ENCODE measurements at regions of chr18 and their contacts with region 1.

Region 1: DNA sequence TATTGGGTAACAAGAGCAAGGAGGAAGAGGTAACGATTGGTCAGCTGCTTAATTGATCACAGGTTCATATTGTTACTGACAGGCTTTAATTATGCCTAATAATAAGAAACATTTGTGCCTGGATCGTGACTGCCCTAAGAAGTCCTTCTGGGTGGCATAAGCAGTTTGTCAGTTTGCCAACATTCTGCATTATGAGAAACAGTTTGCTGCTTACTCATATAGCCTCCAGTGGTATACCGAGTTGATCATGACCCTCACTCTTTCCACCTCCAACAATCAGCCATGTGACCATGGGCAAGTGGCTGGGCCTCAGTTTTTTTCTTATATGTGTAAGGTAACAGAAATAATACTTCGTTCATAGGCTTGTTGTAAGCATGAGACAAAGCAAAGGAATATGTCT is 96.6 kb upstream of the CABLES1 start:
- DNase-seq: peak; percentile 42
- H3K4me3 ChIP-seq: no peak overlapping the region
- H3K27ac ChIP-seq: no peak overlapping the region
- H3K4me1 ChIP-seq: no peaks in the 10 kb centered on the region
- H3K27me3 ChIP-seq: no peaks in the 10 kb centered on the region
- CTCF ChIP-seq: no peak

Region 2: DNA sequence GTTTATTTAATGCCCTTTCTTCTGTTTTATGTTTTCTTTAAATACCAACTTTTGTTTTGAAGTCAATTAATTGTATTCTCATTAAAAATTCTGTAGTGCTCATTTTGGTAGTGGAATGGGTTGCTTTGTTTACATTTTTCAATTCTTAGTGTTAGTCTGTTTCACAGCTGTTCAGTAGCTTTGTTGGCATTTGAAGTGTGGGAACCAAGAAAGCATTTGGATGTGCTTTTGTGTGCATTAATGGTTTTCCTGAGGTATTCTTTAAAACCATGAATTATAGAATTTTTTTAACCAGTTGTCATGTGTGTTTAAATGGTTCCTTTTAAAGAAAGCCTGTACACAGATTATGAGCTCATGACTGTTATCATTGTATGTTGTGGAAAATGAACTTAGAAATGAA is 1278.4 kb before region 1 on chr18:
- CTCF ChIA-PET with region 1: no interaction called
- POLR2A ChIA-PET with region 1: no interaction called
- intact Hi-C with region 1: no loop called
- DNase-seq: no peak
- H3K4me3 ChIP-seq: no peak overlapping the region
- H3K27ac ChIP-seq: no peak overlapping the region
- H3K4me1 ChIP-seq: peaks cover 40% of the 10 kb centered on the region
- H3K27me3 ChIP-seq: no peaks in the 10 kb centered on the region
- CTCF ChIP-seq: no peak

Region 3: GRCh38 chr18:22913857-22914256 is 124.9 kb before region 1 on chr18:
- CTCF ChIA-PET with region 1: no interaction called
- POLR2A ChIA-PET with region 1: interaction called, 16 read pairs
- intact Hi-C with region 1: no loop called
- DNase-seq: no peak
- H3K4me3 ChIP-seq: no peak overlapping the region
- H3K27ac ChIP-seq: no peak overlapping the region
- H3K4me1 ChIP-seq: no peaks in the 10 kb centered on the region
- H3K27me3 ChIP-seq: no peaks in the 10 kb centered on the region
- CTCF ChIP-seq: no peak

Region 4: DNA sequence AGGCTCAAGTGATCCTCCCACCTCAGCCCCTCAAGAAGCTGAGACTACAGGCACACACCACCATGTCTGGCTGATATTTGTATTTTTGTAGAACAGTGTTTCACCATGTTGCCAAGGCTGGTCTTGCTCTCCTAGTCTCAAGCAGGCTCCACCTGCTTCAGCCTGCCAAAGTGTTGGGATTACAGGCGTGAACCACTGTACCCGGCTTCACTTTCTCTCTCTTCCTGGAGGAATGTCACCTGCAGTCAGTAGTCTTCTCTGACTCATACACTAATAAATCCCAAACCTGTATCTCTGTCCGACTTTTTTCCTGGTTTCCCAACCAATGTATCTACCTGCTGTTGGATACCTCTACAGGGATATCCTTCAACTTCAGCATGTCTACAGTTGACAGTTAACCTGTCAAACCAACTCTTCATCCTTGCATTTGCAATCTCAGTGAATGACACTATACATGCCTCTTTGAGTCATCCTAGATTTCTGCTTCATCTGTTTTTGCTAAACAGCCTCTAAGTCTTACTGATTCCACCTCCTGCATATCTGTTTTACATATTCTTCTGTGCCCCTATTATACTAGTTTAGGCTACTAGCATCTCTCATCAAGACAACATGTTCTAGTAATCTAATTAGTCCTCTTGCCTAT is 51.0 kb before region 1 on chr18:
- CTCF ChIA-PET with region 1: no interaction called
- POLR2A ChIA-PET with region 1: no interaction called
- intact Hi-C with region 1: no loop called
- DNase-seq: no peak
- H3K4me3 ChIP-seq: no peak overlapping the region
- H3K27ac ChIP-seq: no peak overlapping the region
- H3K4me1 ChIP-seq: no peaks in the 10 kb centered on the region
- H3K27me3 ChIP-seq: no peaks in the 10 kb centered on the region
- CTCF ChIP-seq: no peak

Measured in A673 (cell line).